T-cell (primary cell): ENCODE measurements at regions of chr2 and their contacts with region 1.

Region 1: DNA sequence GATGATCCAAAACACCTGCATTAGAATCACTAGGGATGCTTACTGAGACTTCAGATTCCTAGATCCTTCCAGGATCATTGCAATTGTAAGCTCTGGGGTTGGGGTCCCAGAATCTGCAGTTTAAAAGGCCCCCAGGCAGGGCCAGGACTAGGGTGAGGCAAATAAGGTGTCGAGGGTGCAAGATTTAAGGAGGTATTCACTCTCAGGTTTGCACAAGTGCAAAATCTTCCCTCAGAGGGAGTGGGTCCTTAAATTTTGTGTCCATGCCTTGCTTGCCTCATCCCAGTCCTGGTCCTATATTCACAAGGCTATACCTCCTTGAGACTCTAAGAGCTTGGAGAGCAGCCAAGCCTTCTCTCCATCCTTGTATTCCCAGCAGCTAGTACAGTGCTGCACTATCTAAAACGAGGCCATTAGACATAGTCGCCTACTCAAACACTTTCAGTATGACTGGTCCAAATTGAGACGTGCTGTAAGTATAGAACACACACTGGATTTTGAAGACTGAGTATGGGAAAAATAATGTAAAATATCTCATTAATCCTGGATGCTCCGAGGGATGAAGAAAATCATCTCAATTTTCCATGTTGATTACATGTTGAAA is 31.6 kb upstream of the MREG start:
- DNase-seq: no peak
- ATAC-seq: no peak
- H3K4me3 ChIP-seq: no peak overlapping the region
- H3K4me3 Mint-ChIP-seq: no peak overlapping the region
- H3K27ac ChIP-seq: no peak overlapping the region
- H3K27ac Mint-ChIP-seq: no peak overlapping the region
- H3K4me1 ChIP-seq: no peaks in the 10 kb centered on the region
- H3K4me1 Mint-ChIP-seq: no peaks in the 10 kb centered on the region
- H3K27me3 ChIP-seq: no peaks in the 10 kb centered on the region
- H3K27me3 Mint-ChIP-seq: no peaks in the 10 kb centered on the region

Region 2: GRCh38 chr2:216073773-216074172 is 28.8 kb after region 1 on chr2:
- CTCF ChIA-PET with region 1: interaction called in 1 of 2 experiments, 3 read pairs
- POLR2A ChIA-PET with region 1: interaction called in 1 of 2 experiments, 11 read pairs
- DNase-seq: no peak
- ATAC-seq: no peak
- H3K4me3 ChIP-seq: no peak overlapping the region
- H3K4me3 Mint-ChIP-seq: peak overlapping the region in 1 of 3 donors; percentile 12
- H3K27ac ChIP-seq: no peak overlapping the region
- H3K27ac Mint-ChIP-seq: peak overlapping the region; percentile 44 to 72
- H3K4me1 ChIP-seq: peaks cover 6 to 16% of the 10 kb centered on the region in 2 experiments
- H3K4me1 Mint-ChIP-seq: peaks cover 35 to 41% (median 36%) of the 10 kb centered on the region in 3 donors
- H3K27me3 ChIP-seq: no peaks in the 10 kb centered on the region
- H3K27me3 Mint-ChIP-seq: no peaks in the 10 kb centered on the region